Head of caudate nucleus (tissue), 42 donors: ENCODE measurements at regions of chr17 and their contacts with region 1.

Region 1: DNA sequence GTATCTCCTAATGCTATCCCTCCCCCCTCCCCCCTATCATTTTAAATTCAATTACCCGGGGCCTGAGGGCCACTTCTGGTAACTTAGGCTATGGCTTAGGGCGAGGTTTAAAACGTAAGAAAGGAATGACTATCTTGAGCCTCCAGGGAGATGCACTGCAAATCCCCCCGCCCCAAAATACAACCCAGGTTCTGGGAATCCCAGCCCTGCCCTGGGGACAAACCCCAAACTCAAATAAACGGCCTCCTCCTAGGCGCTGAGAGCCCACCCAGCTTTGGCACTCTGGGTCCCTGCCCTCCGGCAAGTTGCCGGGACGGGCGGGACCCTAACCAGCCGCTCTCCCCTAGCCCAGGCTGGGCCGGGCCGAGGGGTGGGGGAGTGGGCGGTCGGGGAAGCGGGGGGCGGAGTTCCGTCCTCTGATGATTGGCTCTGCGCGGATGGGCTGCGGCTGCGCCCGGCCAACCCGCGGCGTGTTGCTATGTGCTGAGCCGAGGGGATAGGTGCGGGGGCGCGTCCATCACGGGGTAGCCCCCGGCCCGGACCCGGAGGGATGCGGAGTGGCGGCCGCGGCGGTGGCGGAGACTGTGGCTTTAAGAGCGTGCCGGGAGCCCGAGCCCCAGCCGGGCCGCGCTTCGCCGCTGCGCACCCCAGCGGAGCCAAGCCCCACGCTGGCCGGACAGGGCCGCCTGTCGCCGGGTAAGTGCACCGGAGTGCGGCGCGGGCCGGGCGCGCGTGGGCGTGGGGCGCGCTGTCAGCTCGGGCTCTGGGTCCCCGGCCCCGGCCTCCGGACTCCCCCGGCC is at the start of gene YPEL2:
- DNase-seq: peak; percentile 93 to 99 (median 98)

Region 2: GRCh38 chr17:59046192-59046591 is 285.1 kb before region 1 on chr17:
- intact Hi-C with region 1: no loop called
- DNase-seq: no peak

Region 3: DNA sequence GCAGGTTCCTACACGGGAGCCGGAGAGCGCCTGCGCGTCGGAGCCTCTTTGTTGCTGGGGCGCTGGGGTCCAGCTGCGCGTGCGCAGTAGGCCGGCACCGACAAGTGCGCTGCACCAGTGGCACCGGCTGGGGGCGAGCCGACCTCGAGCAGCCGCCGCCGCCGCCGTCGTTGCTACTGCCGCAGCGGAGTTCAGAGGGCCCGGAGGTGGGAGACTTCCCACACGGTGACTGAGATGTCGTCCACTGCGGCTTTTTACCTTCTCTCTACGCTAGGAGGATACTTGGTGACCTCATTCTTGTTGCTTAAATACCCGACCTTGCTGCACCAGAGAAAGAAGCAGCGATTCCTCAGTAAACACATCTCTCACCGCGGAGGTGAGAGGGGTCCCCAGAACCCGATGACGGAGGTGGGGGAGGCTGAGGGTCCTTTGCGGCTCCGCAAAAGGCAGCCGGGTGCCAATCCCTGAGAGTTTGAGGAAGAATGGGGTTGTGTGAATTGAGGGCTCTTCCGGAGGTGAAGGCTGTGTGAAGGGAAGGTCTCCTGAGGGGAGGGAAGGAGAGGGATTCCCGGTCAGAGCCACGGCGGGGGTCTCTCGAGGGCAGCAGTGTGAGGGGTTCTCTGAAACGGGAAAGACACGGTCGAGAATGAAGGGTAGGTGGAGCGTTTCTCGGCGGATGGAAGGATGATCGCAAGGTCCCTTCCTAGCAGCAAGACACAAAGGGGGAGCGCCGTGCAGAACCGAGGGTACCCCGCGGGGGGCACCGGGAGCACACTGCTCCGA is 110.8 kb before region 1 on chr17 and contains the start of gene GDPD1:
- intact Hi-C with region 1: loop called (anchors 10 kb)
- DNase-seq: peak; percentile 89 to 99 (median 96)

Region 4: GRCh38 chr17:59287452-59287851 is 43.9 kb before region 1 on chr17:
- intact Hi-C with region 1: no loop called
- DNase-seq: no peak

Region 5: DNA sequence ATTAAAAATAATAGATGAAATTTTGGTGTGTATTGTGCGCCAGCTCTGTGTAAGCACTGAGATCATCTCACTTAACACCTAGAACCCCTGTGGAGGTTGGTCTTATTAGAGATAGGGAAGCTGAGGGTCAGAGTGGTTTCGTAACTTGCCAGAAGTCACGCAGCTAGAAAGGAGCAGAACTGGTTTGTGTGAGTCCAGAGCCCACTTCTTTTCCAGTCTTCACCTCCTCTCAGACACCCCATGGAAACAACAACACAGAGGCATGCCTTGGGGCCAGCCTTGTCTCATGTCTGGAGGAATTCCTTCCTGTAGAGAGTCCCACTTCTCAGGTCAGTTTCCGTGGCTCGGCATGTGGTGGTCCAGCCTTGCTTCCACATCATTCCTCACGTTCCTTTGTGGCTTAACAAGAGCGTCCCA is 16.7 kb after region 1 on chr17:
- intact Hi-C with region 1: loop called (anchors 1 kb)
- DNase-seq: no peak

Region 6: DNA sequence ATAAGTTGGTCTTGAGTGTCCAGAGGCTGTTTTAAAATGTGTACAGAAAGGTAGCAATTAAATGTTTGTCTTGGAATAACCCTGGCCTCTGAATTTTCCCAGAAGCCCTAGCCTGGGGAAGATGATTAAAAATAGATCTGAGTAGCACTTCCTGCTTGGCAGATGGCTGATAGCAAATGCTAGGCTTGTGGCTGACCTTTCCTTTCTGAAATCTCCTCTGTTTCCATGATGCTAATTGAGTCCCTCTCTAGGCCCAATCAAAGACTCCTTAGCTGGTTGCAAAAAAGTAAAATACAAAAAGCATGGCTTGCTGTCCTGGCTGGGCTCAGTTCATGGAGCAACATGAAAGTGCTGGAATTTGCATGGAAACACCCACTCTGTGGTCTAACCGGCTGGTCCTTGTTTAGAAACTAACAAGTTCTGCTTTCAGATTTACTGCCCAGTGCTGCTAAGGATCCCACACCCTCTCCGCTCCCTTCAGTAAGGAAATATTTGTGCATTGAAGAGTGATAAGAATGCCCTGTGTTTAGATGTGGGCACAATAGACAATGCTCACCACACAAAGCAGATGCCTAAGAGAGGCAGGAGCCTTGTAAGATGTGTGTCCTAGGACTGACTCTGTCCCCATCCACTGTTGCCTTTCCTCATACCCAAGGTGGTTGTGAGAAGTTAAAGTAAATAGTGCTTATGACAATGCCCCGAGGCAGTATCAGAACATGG is 41.0 kb after region 1 on chr17:
- intact Hi-C with region 1: loop called (anchors 5 kb)
- DNase-seq: peak in 5 of 42 donors; percentile 10 to 57 (median 52)

Region 7: GRCh38 chr17:59440784-59441441 is 109.6 kb after region 1 on chr17:
- intact Hi-C with region 1: loop called (anchors 2 kb)
- DNase-seq: peak; percentile 75 to 98 (median 92)